ENCODE measurements at regions of chr3 and their contacts with region 1.

Region 1: DNA sequence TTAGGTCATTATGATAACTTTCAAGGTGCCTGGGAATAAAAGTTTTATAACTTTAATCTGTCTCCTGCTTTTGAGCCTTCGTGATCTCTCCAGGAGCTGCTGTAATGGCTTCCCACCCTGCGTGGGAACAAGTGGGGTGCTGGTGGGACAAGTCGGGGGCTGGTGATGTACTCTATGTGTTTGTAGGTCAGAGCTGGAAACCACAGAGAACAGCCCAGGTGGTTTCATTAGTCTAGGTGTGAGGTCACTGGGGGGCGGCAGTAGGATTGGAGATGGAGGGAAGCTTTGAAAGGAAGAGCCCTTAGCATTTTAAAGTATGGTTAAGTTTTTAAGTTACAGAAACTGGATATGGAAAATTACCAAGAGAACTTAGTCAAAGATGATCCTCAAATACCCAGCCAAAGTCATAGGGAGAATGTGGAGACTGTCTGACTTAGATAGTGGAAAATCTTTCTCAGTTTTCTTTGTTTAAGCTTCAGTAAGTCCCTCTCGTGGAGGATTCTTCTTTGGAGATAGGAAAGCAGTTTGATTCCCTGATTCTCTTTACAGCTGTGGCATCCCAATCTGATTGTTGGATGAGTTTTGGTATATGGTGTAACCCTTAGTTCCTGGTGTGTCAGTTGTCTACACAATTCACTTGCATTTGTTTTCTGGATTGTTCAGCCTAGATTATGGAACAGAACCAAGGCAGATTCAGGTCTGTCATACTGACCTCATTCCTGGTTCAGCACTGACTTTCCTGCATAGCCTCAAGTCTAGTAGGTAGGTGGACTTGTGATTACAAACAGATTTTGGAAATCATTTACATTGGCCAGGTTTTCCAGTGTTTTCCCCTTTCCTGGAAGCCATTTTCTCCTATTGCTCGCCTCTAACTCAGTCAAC is 115.6 kb downstream of the FNDC3B start:
- DNase-seq: no peak
- H3K4me3 ChIP-seq: no peak overlapping the region
- H3K27ac ChIP-seq: peak overlapping the region; percentile 63
- H3K4me1 ChIP-seq: peaks cover 43% of the 10 kb centered on the region
- H3K27me3 ChIP-seq: no peaks in the 10 kb centered on the region
- CTCF ChIP-seq: no peak

Region 2: DNA sequence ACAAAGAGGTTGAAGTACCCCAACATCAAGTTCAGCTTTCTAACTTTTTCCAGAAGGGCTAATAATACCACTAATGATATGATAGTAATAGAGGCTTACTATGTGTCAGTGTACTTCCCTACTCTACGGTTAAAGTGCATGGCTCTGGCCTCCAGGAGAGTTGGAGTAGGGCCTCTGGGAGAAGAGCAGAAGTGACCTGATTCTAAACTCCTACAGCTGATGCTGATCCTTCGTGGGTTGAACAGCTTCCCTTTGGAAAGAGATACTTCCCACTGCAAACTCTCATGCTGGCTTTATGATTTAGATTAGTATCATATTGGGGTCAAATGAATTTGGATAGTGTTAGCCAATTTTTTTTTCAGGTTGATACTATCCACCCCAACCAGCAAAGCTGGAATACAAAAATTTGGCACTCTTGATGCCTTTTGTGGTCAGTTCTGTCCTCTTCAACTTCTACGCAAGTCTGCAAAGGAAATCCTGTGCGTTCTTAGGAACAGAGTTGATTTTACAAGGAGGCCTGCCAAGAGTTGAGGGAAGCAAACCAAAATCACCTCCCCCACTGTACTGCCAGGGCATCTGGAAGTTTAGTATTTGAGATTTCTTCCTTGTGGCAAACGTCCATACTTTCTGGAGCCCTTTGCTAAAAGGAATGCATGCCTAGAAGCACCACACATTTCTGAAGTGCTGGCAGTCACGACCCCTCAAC is 294.0 kb before region 1 on chr3:
- CTCF ChIA-PET with region 1: no interaction called
- POLR2A ChIA-PET with region 1: no interaction called
- intact Hi-C with region 1: no loop called
- DNase-seq: no peak
- H3K4me3 ChIP-seq: no peak overlapping the region
- H3K27ac ChIP-seq: no peak overlapping the region
- H3K4me1 ChIP-seq: no peaks in the 10 kb centered on the region
- H3K27me3 ChIP-seq: no peaks in the 10 kb centered on the region
- CTCF ChIP-seq: no peak

Region 3: GRCh38 chr3:172106989-172107388 is 48.0 kb before region 1 on chr3:
- CTCF ChIA-PET with region 1: no interaction called
- POLR2A ChIA-PET with region 1: interaction called, 14 read pairs
- intact Hi-C with region 1: no loop called
- DNase-seq: no peak
- H3K4me3 ChIP-seq: no peak overlapping the region
- H3K27ac ChIP-seq: no peak overlapping the region
- H3K4me1 ChIP-seq: peaks cover 22% of the 10 kb centered on the region
- H3K27me3 ChIP-seq: no peaks in the 10 kb centered on the region
- CTCF ChIP-seq: no peak

Measured in A673 (cell line).